GM13977 (cell line): ENCODE measurements at regions of chrX and their contacts with region 1.

Region 1: DNA sequence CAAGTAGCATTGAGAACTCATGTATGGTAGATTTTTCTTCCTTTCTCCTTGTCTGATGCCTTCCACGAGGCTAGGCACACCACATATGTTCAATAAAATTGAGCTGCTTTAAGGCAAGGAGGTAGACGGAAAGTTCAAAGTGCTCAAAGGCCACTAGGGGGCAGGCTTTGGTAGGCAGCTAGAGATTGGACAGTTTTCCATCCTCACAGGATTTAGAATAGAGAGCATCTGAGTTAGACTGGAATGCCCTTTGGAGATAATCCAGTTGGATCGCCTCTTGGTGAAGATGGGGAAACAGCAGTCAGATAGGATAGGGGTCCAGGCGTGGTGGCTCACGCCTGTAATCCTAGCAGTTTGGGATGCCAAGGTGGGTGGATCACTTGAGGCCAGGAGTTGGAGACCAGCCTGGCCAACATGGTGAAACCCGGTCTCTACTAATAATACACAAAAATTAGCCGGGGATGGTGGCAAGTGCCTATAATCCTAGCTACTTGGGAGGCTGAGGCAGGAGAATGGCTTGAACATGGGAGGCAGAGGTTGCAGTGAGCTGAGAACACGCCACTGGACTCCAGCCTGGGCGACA is 30.4 kb downstream of the ELF4 start:
- DNase-seq: peak; percentile 71
- CTCF ChIP-seq: peak; percentile 75

Region 2: GRCh38 chrX:130170752-130171445 is 91.0 kb after region 1 on chrX:
- in situ Hi-C with region 1: loop called (anchors 10 kb)
- DNase-seq: peak; percentile 79
- CTCF ChIP-seq: no peak